ENCODE measurements at regions of chr22 and their contacts with region 1.

Region 1: DNA sequence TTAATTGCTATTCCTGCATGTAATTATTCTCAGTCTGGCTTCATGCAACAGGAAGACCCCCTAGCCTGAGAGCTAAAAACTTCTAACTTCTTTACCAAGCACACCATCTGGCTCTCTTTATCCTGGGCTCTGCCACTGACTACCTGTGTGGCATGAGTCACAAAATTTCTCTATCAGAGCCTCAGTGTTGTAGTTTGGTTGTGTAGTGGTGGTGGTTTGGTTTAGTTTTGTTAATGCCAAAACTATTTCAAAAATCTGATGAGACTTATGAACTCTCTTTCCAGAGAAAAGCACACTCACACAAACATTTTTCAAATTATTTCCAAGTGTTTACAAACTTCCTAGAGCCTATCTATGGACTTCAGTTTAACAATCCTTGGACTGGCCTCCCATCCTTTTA is 7.5 kb upstream of the IL17RA start:
- DNase-seq: no peak
- ATAC-seq: no peak
- H3K4me3 ChIP-seq: no peak overlapping the region
- H3K27ac ChIP-seq: no peak overlapping the region
- H3K4me1 ChIP-seq: peaks cover 0 to 3% of the 10 kb centered on the region in 2 donors
- H3K27me3 ChIP-seq: no peaks in the 10 kb centered on the region
- CTCF ChIP-seq: no peak
- POLR2A ChIP-seq: no peak

Region 2: GRCh38 chr22:17047656-17048055 is 29.6 kb before region 1 on chr22:
- in situ Hi-C with region 1: no loop called
- intact Hi-C with region 1: no loop called
- DNase-seq: no peak
- ATAC-seq: no peak
- H3K4me3 ChIP-seq: no peak overlapping the region
- H3K27ac ChIP-seq: no peak overlapping the region
- H3K4me1 ChIP-seq: no peaks in the 10 kb centered on the region
- H3K27me3 ChIP-seq: no peaks in the 10 kb centered on the region
- CTCF ChIP-seq: no peak
- POLR2A ChIP-seq: no peak

Region 3: GRCh38 chr22:17158568-17159503 is 81.6 kb after region 1 on chr22 and contains the start of gene HDHD5:
- in situ Hi-C with region 1: loop called in 2 of 4 experiments (anchors 10 kb)
- intact Hi-C with region 1: no loop called
- DNase-seq: peak; percentile 86 to 88
- ATAC-seq: peak; percentile 89
- H3K4me3 ChIP-seq: peak within 1 kb of the TSS; percentile 70 to 90 (median 80)
- H3K27ac ChIP-seq: peak within 1 kb of the TSS; percentile 91 to 94 (median 91)
- H3K4me1 ChIP-seq: peaks cover 31 to 39% of the 10 kb centered on the region in 2 donors
- H3K27me3 ChIP-seq: no peaks in the 10 kb centered on the region
- CTCF ChIP-seq: peak in 1 of 5 experiments; percentile 11
- POLR2A ChIP-seq: peak; percentile 82 to 83
- total RNA-seq, gene HDHD5: 32.0 to 38.5 (median 35.1) TPM

Region 4: DNA sequence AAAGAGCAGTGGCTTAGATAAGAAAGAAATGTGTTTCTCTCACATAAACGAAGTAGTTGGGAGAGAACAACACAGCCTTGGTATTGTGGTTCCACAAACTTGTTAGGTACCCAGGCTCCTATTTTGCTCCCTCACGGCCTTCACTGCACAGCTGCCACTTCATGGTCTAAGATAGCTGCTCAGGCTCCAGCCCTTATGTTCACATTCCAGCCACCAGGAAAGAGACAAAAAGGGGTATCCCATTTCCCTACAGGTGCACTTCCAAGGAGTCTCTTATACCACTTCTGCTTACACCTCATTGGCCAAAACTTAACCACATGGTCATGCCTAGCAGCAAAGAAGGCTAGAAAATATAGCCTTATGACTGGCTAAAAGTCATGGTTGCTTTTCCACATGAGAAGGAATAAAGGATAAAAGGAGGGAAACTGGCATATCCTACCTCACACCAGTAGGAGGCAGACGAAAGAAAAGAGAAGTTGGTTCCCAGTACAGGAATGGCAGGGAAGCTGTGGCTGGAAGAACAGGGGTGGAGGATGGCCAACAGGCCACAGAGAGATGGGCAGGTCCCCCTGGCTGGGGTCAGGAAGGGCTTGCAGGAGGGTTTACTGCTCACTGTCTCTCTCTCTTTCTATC is 87.3 kb after region 1 on chr22:
- in situ Hi-C with region 1: loop called in 2 of 4 experiments (anchors 10 kb)
- intact Hi-C with region 1: no loop called
- DNase-seq: no peak
- ATAC-seq: no peak
- H3K4me3 ChIP-seq: no peak overlapping the region
- H3K27ac ChIP-seq: no peak overlapping the region
- H3K4me1 ChIP-seq: peaks cover 11 to 19% of the 10 kb centered on the region in 2 donors
- H3K27me3 ChIP-seq: no peaks in the 10 kb centered on the region
- CTCF ChIP-seq: no peak
- POLR2A ChIP-seq: no peak

Region 5: DNA sequence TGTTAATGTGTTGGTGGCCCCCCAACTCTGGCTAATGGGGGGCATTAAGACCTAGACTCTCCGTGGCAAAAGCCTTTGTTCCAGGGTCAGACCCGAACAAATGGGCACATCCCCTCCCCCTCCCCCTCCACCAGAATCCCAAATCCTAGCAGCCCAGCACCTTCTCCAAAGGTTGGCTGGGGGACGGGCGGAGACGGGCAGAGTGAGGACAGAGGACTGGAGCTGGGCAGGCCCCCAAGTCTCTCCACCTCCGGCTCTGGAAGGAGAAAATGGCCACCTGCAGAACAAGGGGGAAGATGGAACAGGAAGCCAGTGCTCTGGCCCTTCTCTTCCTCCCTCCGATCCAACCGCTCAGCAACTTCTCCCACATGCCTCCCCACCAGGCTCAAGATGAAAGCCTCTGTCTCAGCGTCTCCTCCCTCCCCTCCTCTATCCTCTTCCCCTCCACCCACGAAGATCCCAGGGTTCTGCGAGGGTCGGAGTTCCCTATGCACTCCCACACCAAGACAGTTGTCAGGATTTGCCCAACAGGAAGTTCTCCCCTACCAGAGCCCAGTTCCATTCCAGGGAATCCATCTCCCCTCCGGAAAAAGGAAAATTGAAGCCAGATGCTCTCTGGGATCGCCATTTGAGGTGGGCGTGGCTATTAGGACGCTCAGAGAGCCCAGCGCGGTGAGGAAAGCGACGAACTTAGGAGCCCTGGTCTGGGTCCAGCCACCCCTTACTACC is 121.9 kb after region 1 on chr22:
- in situ Hi-C with region 1: no loop called
- intact Hi-C with region 1: loop called (anchors 10 kb)
- DNase-seq: peak; percentile 13 to 22
- ATAC-seq: peak; percentile 60 to 64
- H3K4me3 ChIP-seq: peak overlapping the region; percentile 25 to 53 (median 38)
- H3K27ac ChIP-seq: peak overlapping the region; percentile 27 to 76 (median 66)
- H3K4me1 ChIP-seq: no peaks in the 10 kb centered on the region
- H3K27me3 ChIP-seq: no peaks in the 10 kb centered on the region
- CTCF ChIP-seq: no peak
- POLR2A ChIP-seq: no peak

Region 6: DNA sequence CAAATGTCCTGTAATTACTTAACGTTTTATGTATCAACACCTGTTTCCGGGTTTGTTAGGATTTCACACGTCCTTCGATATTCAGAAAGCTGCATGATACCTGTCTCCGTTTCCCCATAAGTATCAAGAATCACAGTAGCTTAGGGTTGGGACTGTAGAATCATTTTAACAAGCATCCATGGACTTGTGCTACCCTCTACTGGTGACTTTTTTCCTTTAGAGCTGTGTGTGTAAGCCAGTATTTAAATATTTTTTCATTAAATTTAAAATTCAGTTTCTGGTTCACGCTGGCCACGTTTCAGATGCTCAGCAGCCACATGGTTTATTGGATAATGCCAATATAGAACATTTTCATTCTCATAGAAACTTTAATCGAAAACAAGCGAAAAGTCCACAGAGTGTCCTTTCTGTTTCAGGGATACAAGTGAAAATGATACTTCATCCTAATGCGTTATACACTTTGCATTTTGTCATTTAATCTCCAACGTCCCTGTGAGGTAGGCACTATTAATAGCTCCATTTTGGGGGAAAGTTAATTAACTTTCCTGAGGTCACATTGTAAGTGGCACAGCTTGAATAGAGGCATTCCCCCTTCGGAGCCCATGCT is 424.5 kb after region 1 on chr22:
- in situ Hi-C with region 1: loop called in 2 of 4 experiments (anchors 5 to 10 kb)
- intact Hi-C with region 1: loop called (anchors 5 kb)
- DNase-seq: no peak
- ATAC-seq: peak; percentile 77 to 90
- H3K4me3 ChIP-seq: no peak overlapping the region
- H3K27ac ChIP-seq: peak overlapping the region; percentile 20 to 52 (median 32)
- H3K4me1 ChIP-seq: peaks cover 4 to 10% of the 10 kb centered on the region in 2 donors
- H3K27me3 ChIP-seq: no peaks in the 10 kb centered on the region
- CTCF ChIP-seq: peak; percentile 71 to 77 (median 74)
- POLR2A ChIP-seq: no peak

Region 7: DNA sequence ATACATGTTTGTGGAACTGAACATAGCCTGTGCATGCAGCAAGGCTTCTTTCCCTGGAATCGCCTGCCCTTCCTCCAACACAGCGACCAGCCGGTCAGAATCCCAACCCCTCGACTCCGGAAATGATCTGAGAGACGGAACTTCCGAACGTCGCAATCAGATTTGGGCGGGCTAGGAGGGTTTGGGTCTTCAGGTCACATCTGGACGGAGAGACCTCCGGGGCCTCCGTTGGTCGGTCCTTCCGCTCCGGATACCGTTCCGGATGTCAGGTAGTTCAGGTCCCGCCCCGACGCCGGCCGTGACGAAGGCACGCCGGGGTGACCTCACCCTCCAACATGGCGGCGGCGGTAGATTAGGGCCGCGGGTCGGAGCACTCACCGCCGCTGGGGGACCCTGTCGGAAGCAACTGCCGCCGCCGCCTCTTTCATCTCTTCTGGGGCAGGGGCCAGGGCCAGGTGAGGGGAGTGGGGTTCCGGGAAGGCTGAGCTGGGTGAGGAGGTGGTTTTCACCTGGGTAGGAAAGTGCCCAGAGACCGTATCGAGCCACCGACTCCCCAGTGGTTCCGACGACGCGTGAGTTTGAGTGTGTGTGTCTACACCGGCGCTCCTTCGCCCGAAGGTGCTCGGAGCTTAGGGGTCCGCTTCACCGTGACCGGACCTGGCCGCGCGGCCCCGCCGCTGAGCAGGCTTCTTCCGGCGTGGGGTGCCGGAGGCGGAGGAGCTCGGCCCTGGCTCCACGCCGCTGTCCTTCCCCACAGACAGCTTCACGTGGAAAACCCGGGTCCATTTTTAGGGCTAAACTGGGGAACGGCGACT is 561.4 kb after region 1 on chr22 and contains the start of gene BCL2L13:
- in situ Hi-C with region 1: no loop called
- intact Hi-C with region 1: loop called (anchors 10 kb)
- DNase-seq: peak; percentile 89 to 92
- ATAC-seq: peak; percentile 85 to 86
- H3K4me3 ChIP-seq: peak within 1 kb of the TSS; percentile 66 to 95 (median 83)
- H3K27ac ChIP-seq: peak within 1 kb of the TSS; percentile 92 to 100 (median 98)
- H3K4me1 ChIP-seq: peaks cover 15 to 19% of the 10 kb centered on the region in 2 donors
- H3K27me3 ChIP-seq: no peaks in the 10 kb centered on the region
- CTCF ChIP-seq: peak in 2 of 5 experiments; percentile 10 to 14
- POLR2A ChIP-seq: peak; percentile 95 to 99
- total RNA-seq, gene BCL2L13: 162 to 310 (median 231) TPM

Region 8: GRCh38 chr22:17785185-17786184 is 708.2 kb after region 1 on chr22:
- in situ Hi-C with region 1: no loop called
- intact Hi-C with region 1: loop called (anchors 10 kb)
- DNase-seq: peak; percentile 63 to 85
- ATAC-seq: peak; percentile 34 to 40
- H3K4me3 ChIP-seq: no peak overlapping the region
- H3K27ac ChIP-seq: peak overlapping the region; percentile 85 to 94 (median 90)
- H3K4me1 ChIP-seq: peaks cover 22 to 29% of the 10 kb centered on the region in 2 donors
- H3K27me3 ChIP-seq: no peaks in the 10 kb centered on the region
- CTCF ChIP-seq: peak; percentile 50 to 85 (median 68)
- POLR2A ChIP-seq: no peak

Measured in gastrocnemius medialis (tissue), 4 donors.